HEK293 (cell line): ENCODE measurements at regions of chr9 and their contacts with region 1.

Region 1: DNA sequence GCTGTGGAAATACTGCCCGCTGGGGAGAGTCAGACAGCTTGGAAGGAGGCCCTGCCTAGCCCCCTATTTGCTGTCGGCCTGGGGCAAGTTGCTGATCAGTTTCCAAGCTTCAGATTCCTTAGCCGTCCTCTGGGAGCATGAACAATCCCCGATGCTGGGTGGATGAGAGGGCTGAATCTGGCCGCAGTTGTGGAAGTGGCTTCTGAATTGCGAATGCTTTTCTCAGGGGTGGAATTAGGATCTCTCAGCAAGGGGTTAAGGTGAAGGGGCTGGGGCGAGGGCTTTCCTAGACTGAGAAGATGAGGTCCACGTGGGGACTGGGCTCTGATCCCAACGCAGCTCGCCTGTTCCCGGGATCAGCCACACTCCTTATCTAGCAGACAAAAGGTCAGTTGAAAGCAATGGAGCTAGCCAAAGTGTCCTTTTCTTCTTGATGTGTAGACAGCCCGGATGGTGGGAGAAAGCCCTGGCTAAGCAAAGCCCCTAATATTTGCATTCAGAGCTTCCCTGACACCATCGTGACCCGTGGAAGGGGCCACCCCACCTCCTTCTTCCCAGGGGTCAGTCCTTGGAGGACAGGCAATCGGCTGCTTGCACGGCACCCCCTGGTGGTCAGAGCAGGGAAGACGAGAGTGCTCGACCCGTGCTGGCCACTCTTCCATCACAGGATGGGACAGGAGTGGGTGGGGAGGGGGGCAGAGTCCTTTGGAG is 54.9 kb downstream of the COL15A1 start:
- H3K4me3 ChIP-seq: no peak overlapping the region
- H3K27ac ChIP-seq: no peak overlapping the region
- H3K4me1 ChIP-seq: no peaks in the 10 kb centered on the region
- CTCF ChIP-seq: peak; percentile 61

Region 2: DNA sequence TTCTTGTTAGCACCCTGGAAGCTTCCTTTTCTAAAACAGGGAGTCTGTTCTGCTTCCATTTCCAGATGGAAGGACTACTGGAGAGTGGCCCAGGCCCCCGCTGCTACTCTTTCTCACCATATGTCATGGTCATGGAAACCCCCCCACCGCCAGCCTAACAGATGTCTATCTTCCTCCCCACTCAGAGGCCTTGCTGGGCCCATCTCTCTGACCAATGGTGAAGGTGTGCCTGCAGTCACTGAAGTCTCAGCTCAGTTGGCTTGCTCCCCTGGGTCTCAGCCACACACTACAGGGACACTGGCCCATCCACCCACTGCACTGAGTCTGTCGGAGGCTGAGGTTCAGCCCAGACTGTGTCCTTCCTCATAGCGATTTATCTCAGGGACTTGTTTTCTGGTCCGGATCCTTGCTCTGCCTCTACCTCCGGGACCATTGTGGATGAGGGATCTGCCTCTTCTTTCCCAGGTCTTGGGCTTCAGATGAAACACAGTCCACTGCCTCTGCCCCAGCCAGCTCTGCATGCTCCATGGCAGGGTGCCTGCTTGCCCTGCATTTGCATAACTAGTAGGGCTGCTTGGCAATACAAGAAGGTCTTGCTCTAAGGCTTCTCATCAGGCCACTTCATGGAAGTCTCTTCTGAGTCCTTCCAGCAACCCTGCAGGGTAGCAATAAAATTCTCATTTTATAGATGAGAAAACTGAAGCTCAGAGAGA is 160.3 kb before region 1 on chr9:
- CTCF ChIA-PET with region 1: interaction called, 12 read pairs
- POLR2A ChIA-PET with region 1: no interaction called
- H3K4me3 ChIP-seq: no peak overlapping the region
- H3K27ac ChIP-seq: no peak overlapping the region
- H3K4me1 ChIP-seq: no peaks in the 10 kb centered on the region
- CTCF ChIP-seq: no peak

Region 3: DNA sequence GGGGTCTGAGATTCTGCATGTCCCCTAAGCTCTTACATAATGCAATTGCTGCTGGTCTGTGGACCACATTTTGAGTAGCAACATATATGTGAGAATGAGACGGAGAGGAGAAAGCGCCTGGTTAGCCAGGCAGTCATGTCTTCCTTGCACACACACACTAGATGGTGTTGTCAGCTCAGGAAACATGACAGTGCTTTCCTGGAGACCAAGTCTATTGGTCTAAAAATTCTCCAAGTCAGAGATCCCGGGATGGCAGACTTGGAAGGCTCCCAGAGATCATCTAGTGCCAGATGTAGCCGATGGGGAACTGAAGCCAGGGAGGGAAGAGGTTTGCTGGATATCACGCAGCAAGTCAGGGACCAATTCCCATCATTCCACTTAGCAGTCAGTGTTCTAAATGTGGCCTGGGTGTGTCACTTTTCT is 137.7 kb before region 1 on chr9:
- CTCF ChIA-PET with region 1: interaction called, 65 read pairs
- POLR2A ChIA-PET with region 1: no interaction called
- H3K4me3 ChIP-seq: no peak overlapping the region
- H3K27ac ChIP-seq: no peak overlapping the region
- H3K4me1 ChIP-seq: no peaks in the 10 kb centered on the region
- CTCF ChIP-seq: peak; percentile 49; the same call in 1 of the 2 replicates

Region 4: DNA sequence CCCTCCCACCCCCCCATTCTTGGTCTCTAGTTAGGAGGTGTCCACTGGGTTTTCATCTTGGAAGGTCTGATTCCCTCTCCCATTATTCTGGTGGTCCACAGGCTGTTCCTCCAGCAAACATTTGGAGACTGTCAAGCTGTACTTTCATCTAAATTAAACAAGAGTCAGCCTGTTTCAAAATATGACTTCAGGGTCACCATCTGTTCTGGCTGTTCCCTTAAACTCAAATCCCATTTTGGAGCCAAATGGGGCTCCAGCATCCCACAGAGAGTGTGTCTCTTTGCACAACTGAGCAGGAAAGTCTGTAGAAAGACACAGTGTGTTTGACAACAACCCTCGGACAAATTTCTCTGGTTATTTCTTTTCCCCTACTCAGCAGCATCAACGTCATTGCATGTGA is 34.4 kb before region 1 on chr9:
- CTCF ChIA-PET with region 1: interaction called, 13 read pairs
- POLR2A ChIA-PET with region 1: no interaction called
- H3K4me3 ChIP-seq: no peak overlapping the region
- H3K27ac ChIP-seq: no peak overlapping the region
- H3K4me1 ChIP-seq: no peaks in the 10 kb centered on the region
- CTCF ChIP-seq: no peak

Region 5: DNA sequence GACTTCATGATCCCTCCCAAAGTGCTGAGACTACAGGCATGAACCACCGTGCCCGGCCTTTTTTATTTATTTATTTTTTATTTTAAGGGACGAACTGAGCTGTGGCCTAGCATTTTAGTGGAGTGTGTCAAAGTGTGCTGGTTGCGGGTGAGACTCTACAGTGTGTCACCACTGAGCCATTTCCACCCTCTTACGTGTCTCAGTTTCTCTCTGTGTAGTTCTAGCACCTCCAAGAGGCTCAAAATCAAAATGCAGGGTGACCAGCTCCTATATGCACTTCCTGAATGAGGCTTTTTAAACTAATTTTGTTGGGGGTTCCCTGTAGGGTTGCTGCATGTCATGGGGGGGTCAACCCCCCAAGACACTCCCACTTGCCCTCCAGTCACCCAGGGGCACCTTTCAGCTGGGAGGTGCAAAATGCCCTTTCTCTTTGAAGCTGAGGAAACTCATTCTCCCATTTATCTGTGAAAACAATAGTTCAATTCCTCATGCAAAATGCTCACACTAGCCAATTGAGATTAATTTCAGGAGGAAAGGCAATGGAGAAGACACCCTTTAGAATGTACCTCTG is 14.4 kb after region 1 on chr9:
- CTCF ChIA-PET with region 1: interaction called, 16 read pairs
- POLR2A ChIA-PET with region 1: no interaction called
- H3K4me3 ChIP-seq: no peak overlapping the region
- H3K27ac ChIP-seq: no peak overlapping the region
- H3K4me1 ChIP-seq: no peaks in the 10 kb centered on the region
- CTCF ChIP-seq: no peak